ENCODE measurements at regions of chr19 and their contacts with region 1.

Region 1: GRCh38 chr19:10332955-10333757 is at the start of gene RAVER1:
- DNase-seq: peak; percentile 99
- ATAC-seq: peak; percentile 97
- H3K4me3 Mint-ChIP-seq: peak within 1 kb of the TSS; percentile 97
- H3K27ac Mint-ChIP-seq: peak within 1 kb of the TSS; percentile 96
- H3K4me1 Mint-ChIP-seq: peaks cover 25% of the 10 kb centered on the region
- H3K27me3 Mint-ChIP-seq: no peaks in the 10 kb centered on the region
- total RNA-seq, gene RAVER1: 83.7 to 90.8 TPM

Region 2: DNA sequence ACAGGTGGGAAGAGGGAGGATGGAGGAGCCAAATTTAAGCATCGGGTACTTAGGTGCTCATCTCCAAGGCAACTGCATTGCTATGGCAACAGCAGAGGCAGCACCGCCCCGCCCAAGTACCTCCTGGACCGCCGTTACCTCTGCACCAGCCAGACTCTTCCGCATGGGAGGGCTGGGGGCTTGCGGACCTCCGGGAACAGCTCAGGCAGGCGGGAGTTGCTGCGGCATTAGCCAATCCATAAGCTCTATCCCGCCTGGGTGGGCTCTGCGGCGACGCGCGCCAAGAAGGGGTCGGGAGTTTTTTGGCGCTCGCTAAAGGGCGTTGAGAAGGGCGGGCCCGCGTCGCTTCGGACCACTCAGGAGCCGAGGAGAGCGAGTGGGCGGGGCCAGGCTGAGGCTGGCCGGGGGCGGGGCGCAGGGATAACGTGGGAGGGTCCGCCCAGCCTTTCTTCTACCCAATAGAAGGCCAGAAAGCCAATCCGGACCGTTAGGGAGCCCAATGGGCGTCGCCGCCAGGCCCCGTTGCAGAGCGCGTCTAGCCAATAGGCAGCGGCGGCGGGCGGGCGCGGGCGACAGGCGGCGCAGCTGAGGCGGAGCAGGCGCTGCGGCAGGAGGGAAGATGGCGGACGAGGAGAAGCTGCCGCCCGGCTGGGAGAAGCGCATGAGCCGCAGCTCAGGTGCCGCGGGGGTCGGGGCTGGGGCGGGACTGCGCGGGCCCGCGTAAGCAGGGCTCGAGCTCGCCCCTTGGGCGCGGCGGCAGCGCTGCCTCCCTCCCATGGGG is 498.2 kb before region 1 on chr19 and contains the start of gene PIN1:
- CTCF ChIA-PET with region 1: no interaction called
- POLR2A ChIA-PET with region 1: no interaction called
- intact Hi-C with region 1: loop called in 1 of 2 experiments (anchors 1 kb)
- DNase-seq: peak; percentile 100
- ATAC-seq: peak; percentile 99
- H3K4me3 Mint-ChIP-seq: peak within 1 kb of the TSS; percentile 86
- H3K27ac Mint-ChIP-seq: peak within 1 kb of the TSS; percentile 88
- H3K4me1 Mint-ChIP-seq: peaks cover 20% of the 10 kb centered on the region
- H3K27me3 Mint-ChIP-seq: no peaks in the 10 kb centered on the region
- total RNA-seq, gene PIN1: 70.4 to 74.2 TPM

Region 3: GRCh38 chr19:10194500-10195289 is 138.5 kb before region 1 on chr19 and contains the start of gene DNMT1:
- CTCF ChIA-PET with region 1: no interaction called
- POLR2A ChIA-PET with region 1: no interaction called
- intact Hi-C with region 1: loop called in 1 of 2 experiments (anchors 1 kb)
- DNase-seq: peak; percentile 99
- ATAC-seq: peak; percentile 94
- H3K4me3 Mint-ChIP-seq: peak within 1 kb of the TSS; percentile 89
- H3K27ac Mint-ChIP-seq: peak within 1 kb of the TSS; percentile 97
- H3K4me1 Mint-ChIP-seq: peaks cover 49% of the 10 kb centered on the region
- H3K27me3 Mint-ChIP-seq: no peaks in the 10 kb centered on the region
- total RNA-seq, gene DNMT1: 374 to 385 TPM

Region 4: GRCh38 chr19:10269333-10270179 is 63.6 kb before region 1 on chr19:
- CTCF ChIA-PET with region 1: interaction called, 9 read pairs
- POLR2A ChIA-PET with region 1: interaction called, 11 read pairs
- intact Hi-C with region 1: loop called (anchors 1 to 2 kb)
- DNase-seq: peak; percentile 94
- ATAC-seq: peak; percentile 62
- H3K4me3 Mint-ChIP-seq: peak overlapping the region; percentile 80
- H3K27ac Mint-ChIP-seq: peak overlapping the region; percentile 91
- H3K4me1 Mint-ChIP-seq: peaks cover 35% of the 10 kb centered on the region
- H3K27me3 Mint-ChIP-seq: no peaks in the 10 kb centered on the region

Region 5: GRCh38 chr19:10380313-10381102 is 47.4 kb after region 1 on chr19 and contains the start of gene TYK2:
- CTCF ChIA-PET with region 1: no interaction called
- POLR2A ChIA-PET with region 1: no interaction called
- intact Hi-C with region 1: loop called (anchors 1 kb)
- DNase-seq: peak; percentile 97
- ATAC-seq: peak; percentile 99
- H3K4me3 Mint-ChIP-seq: peak within 1 kb of the TSS; percentile 86
- H3K27ac Mint-ChIP-seq: peak within 1 kb of the TSS; percentile 96
- H3K4me1 Mint-ChIP-seq: peaks cover 22% of the 10 kb centered on the region
- H3K27me3 Mint-ChIP-seq: no peaks in the 10 kb centered on the region
- total RNA-seq, gene TYK2: 151 to 197 TPM

Region 6: DNA sequence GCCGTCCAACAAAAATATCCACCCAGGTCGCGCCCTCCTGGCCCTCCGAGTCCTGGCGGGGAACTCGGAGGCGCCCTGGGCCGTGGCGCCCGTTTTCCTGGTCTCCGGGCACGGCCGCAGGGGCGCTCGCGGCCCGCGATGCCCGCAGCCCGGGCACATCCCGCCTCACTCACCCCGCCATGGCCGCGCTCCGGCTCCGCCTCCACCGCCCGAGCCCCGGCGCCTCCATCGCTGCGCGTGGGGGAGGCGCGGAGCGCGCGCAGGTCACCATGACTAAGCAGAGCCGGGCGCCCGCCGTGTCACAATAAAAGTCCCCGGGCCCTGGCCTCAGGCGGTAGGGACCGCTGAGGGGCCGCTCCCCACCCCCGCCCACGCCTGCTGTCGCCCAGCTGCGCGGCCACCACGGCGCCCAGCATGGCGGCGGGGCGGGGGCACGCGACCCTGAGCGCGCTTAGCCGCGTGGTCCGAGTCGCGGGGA is 169.4 kb after region 1 on chr19:
- CTCF ChIA-PET with region 1: no interaction called
- POLR2A ChIA-PET with region 1: no interaction called
- intact Hi-C with region 1: loop called in 1 of 2 experiments (anchors 1 kb)
- DNase-seq: peak; percentile 95
- ATAC-seq: peak; percentile 91
- H3K4me3 Mint-ChIP-seq: peak overlapping the region; percentile 91
- H3K27ac Mint-ChIP-seq: peak overlapping the region; percentile 95
- H3K4me1 Mint-ChIP-seq: peaks cover 30% of the 10 kb centered on the region
- H3K27me3 Mint-ChIP-seq: no peaks in the 10 kb centered on the region

Region 7: DNA sequence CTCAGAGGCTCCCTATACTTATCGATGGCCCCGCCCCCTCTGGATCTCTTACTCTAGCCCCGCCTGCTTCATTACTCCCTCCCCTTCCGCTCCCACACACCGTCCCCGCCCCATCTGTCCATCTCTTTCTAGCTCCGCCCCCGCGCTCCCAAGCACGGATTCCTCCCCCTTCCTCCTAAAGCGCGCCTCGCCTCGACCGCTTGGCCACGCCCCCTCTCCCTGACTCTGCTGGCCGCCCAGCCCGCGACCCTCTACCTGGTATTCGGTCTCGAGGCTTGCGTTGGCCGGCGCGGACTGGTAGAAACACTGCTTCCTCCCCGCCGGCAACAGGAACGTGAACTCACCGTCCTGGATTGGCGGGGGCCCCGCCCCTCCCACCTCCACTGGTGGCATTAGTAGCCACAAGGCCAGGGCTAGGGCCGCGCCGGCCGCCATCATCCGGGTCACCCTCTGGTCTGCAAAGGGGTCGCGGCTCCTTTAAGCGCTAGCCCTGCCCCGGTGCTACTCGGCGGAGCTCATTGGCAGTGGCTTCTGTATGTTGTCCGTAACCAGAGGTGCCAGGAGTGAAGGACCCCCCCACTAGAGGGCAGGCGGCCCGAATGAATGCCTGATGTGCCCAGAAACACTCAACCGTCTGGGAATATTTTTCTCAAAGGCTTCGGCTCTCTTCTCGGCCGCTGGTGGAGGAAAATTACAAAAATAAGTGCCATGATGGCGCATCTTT is 502.8 kb after region 1 on chr19 and contains the start of gene TMED1:
- CTCF ChIA-PET with region 1: no interaction called
- POLR2A ChIA-PET with region 1: interaction called, 3 read pairs
- intact Hi-C with region 1: loop called in 1 of 2 experiments (anchors 1 kb)
- DNase-seq: peak; percentile 99
- ATAC-seq: peak; percentile 93
- H3K4me3 Mint-ChIP-seq: peak within 1 kb of the TSS; percentile 94
- H3K27ac Mint-ChIP-seq: peak within 1 kb of the TSS; percentile 99
- H3K4me1 Mint-ChIP-seq: peaks cover 15% of the 10 kb centered on the region
- H3K27me3 Mint-ChIP-seq: no peaks in the 10 kb centered on the region
- total RNA-seq, gene TMED1: 8.7 to 15.3 TPM